ENCODE measurements at regions of chr2 and their contacts with region 1.

Region 1: DNA sequence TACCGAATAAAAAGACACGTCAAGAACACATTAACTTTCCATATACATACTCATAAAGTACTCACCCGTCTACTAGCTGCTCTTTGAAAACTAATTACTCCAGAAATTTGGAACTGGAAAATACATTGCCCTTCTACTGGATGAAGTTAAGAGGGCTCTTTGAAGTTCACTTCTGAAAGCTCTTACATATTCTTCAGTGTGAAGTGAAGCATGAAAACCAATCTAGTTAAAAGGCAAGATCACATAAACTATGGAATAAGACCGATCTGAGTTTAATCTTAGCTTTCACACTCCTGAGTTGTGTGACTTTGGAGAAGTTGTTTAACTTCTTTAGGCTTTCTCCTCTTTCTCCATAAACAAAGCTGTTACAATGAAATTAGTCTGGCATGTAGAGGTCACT is 38.5 kb downstream of the REV1 start:
- DNase-seq: no peak
- H3K4me3 ChIP-seq: no peak overlapping the region
- H3K27ac ChIP-seq: no peak overlapping the region
- H3K4me1 ChIP-seq: no peaks in the 10 kb centered on the region
- H3K27me3 ChIP-seq: no peaks in the 10 kb centered on the region

Region 2: DNA sequence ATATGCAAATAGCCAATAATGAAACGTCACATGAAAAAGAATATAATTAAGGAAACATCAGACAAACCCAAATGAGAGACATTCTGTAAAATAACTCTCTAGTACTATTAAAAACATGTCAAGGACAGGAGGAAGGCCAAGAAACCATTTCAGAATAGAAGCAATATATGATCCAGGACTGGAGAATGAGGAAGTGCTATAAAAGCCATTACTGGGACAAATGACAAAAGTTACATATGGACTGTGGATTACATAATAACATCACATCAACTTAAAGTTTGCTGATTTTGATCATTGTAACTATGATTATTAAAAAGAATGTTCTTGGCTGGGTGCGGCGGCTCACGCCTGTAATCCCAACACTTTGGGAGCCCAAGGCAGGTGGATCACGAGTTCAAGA is 596.6 kb before region 1 on chr2:
- CTCF ChIA-PET with region 1: no interaction called
- POLR2A ChIA-PET with region 1: no interaction called
- DNase-seq: peak in 1 of 3 donors; percentile 19
- H3K4me3 ChIP-seq: no peak overlapping the region
- H3K27ac ChIP-seq: no peak overlapping the region
- H3K4me1 ChIP-seq: no peaks in the 10 kb centered on the region
- H3K27me3 ChIP-seq: no peaks in the 10 kb centered on the region

Region 3: GRCh38 chr2:99238599-99238998 is 212.7 kb before region 1 on chr2:
- CTCF ChIA-PET with region 1: no interaction called
- POLR2A ChIA-PET with region 1: no interaction called
- DNase-seq: no peak
- H3K4me3 ChIP-seq: no peak overlapping the region
- H3K27ac ChIP-seq: no peak overlapping the region
- H3K4me1 ChIP-seq: no peaks in the 10 kb centered on the region
- H3K27me3 ChIP-seq: no peaks in the 10 kb centered on the region

Region 4: GRCh38 chr2:99261242-99261641 is 190.0 kb before region 1 on chr2:
- CTCF ChIA-PET with region 1: no interaction called
- POLR2A ChIA-PET with region 1: no interaction called
- DNase-seq: no peak
- H3K4me3 ChIP-seq: no peak overlapping the region
- H3K27ac ChIP-seq: no peak overlapping the region
- H3K4me1 ChIP-seq: peaks cover 0 to 2% (median under 1%) of the 10 kb centered on the region in 4 experiments
- H3K27me3 ChIP-seq: no peaks in the 10 kb centered on the region

Region 5: DNA sequence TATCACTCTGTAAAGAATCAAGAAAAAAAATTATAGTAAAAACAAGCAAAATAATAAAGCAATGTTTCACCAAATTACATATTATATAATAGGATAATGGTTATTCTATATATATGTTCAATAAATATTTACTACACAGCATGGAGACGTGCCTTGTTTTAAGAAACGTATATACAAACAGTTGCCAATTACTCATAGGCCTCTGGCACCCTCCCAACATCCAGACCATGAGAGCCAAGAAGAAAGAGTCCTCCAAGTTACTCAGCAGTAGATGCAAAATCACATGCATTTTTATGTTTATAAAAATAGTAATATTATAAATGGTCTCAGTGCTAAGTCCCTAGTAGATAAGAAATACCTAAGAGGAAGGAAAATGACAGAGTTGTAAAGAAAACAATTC is 26.3 kb before region 1 on chr2:
- CTCF ChIA-PET with region 1: no interaction called
- POLR2A ChIA-PET with region 1: no interaction called
- DNase-seq: no peak
- H3K4me3 ChIP-seq: no peak overlapping the region
- H3K27ac ChIP-seq: no peak overlapping the region
- H3K4me1 ChIP-seq: no peaks in the 10 kb centered on the region
- H3K27me3 ChIP-seq: no peaks in the 10 kb centered on the region

Region 6: GRCh38 chr2:99468155-99468554 is 16.9 kb after region 1 on chr2:
- CTCF ChIA-PET with region 1: interaction called, 11 read pairs
- POLR2A ChIA-PET with region 1: interaction called, 3 read pairs
- DNase-seq: no peak
- H3K4me3 ChIP-seq: no peak overlapping the region
- H3K27ac ChIP-seq: no peak overlapping the region
- H3K4me1 ChIP-seq: peaks cover 0 to 2% (median 0%) of the 10 kb centered on the region in 4 experiments
- H3K27me3 ChIP-seq: no peaks in the 10 kb centered on the region